ENCODE measurements at regions of chrX and their contacts with region 1.

Region 1: GRCh38 chrX:44961817-44962607 is 89.0 kb downstream of the KDM6A start:
- DNase-seq: no peak
- ATAC-seq: no peak

Region 2: GRCh38 chrX:44889824-44890223 is 72.2 kb before region 1 on chrX:
- intact Hi-C with region 1: no loop called
- DNase-seq: no peak
- ATAC-seq: no peak

Region 3: DNA sequence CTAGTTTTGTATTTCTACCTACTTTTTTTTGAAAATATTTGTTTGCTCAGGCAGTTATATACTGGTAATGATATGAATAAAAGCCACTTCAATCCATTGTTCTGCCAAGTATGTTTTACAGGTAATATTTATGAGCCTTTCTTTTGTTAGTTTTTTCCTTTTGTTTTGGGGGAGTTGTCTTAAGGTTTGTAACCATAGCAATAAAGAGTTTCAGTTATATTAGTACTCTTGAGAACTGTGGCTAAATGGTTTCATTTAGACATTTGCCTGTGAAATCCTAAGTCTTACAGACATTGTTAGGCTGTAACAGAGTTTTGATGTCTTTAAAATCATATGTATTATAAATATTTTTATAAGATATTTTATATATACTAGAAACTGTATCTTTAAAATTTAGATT is 88.5 kb after region 1 on chrX:
- intact Hi-C with region 1: loop called (anchors 10 kb)
- DNase-seq: no peak
- ATAC-seq: no peak

Region 4: GRCh38 chrX:45077748-45078424 is 115.9 kb after region 1 on chrX:
- intact Hi-C with region 1: no loop called
- DNase-seq: no peak
- ATAC-seq: no peak